CD4-positive, alpha-beta T cell (primary cell): ENCODE measurements at regions of chr9 and their contacts with region 1.

Region 1: DNA sequence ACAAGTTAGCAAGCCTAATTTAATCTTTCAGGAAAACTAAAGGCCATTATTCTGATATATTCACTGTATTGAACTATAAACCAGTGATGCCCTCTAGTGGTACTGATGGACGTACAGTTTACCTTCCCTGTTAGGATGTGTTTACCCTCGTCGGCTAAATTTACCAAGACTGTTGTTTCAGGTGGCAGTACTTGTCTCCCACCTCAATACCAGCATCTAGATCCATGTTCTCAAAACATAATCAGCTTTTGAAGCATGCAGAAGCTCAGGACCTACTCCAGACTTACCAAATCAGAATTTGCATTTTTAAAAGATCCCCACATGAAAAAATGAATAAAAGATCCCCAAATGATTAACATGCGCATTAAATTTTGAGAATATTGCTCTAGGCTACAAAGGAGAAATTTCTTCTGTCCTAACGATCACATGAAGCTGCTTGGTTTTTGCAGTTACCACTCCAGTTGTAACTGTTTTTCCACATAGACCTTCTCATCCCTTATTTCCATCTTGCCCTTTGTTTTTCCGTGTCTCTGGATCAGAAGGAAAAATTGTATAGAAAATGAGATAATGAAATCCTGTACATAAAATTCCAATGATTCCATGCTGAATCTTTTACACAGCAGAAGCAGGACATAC is 3.2 kb upstream of the BAAT start:
- DNase-seq: peak in 4 of 14 experiments; percentile 13 to 62 (median 48)
- ATAC-seq: peak; percentile 65
- H3K4me3 ChIP-seq: no peak overlapping the region
- H3K4me3 Mint-ChIP-seq: no peak overlapping the region
- H3K27ac ChIP-seq: no peak overlapping the region
- H3K27ac Mint-ChIP-seq: peak overlapping the region; percentile 40
- H3K4me1 ChIP-seq: no peaks in the 10 kb centered on the region
- H3K4me1 Mint-ChIP-seq: peaks cover 32% of the 10 kb centered on the region
- H3K27me3 ChIP-seq: no peaks in the 10 kb centered on the region
- H3K27me3 Mint-ChIP-seq: no peaks in the 10 kb centered on the region
- CTCF ChIP-seq: peak; percentile 60

Region 2: DNA sequence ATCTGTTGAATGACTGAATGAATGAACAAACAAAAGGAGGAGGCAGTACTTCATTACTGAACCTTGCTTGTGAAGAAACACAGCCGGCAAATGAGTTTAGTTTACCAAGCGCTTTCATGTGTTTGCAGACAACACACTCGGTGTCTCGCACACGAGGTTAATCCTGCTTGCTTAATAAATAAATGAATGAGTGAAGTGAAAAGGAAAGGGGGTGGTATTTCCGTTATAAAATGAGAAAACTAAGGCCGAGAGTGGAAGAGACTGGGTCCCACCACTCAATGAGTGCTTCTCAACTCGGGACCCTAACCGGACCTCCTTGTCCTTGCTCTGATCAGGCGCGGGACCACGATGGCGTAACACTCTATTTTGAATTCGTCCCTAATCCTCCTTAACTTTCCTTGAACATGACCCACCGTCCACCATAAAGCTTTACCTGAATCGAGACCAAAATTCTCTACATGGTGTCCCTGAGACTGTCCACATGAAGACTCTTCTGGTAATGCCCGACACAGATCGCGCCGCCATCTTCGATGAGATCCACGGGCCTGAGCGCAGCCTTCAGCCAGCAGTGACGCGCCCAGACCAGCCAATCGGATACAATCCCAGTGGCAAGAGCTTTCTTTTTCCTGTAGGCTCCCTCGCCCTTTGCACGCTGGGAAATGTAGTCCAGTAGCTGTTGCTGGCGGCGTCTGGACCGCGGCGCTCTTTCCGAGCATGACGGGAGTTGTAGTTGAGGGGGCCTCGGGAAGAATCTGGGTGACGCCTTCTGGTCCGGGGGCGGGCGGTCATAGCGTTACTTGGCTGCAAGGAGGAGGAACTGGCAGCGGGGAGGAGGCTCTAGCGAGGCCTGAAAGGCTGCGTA is 10.3 kb after region 1 on chr9 and contains the starts of genes MRPL50 and ZNF189:
- CTCF ChIA-PET with region 1: interaction called, 14 read pairs
- POLR2A ChIA-PET with region 1: interaction called, 15 read pairs
- intact Hi-C with region 1: no loop called
- DNase-seq: peak; percentile 90 to 99 (median 94)
- ATAC-seq: peak; percentile 94
- H3K4me3 ChIP-seq: peak within 1 kb of the TSS; percentile 81
- H3K4me3 Mint-ChIP-seq: peak within 1 kb of the TSS; percentile 99
- H3K27ac ChIP-seq: peak within 1 kb of the TSS; percentile 87 to 92
- H3K27ac Mint-ChIP-seq: peak within 1 kb of the TSS; percentile 99
- H3K4me1 ChIP-seq: peaks cover 32% of the 10 kb centered on the region
- H3K4me1 Mint-ChIP-seq: peaks cover 86% of the 10 kb centered on the region
- H3K27me3 ChIP-seq: no peaks in the 10 kb centered on the region
- H3K27me3 Mint-ChIP-seq: no peaks in the 10 kb centered on the region
- CTCF ChIP-seq: no peak
- total RNA-seq, gene MRPL50: 5.9 to 6.1 TPM
- total RNA-seq, gene ZNF189: 5.0 to 5.3 TPM

Region 3: DNA sequence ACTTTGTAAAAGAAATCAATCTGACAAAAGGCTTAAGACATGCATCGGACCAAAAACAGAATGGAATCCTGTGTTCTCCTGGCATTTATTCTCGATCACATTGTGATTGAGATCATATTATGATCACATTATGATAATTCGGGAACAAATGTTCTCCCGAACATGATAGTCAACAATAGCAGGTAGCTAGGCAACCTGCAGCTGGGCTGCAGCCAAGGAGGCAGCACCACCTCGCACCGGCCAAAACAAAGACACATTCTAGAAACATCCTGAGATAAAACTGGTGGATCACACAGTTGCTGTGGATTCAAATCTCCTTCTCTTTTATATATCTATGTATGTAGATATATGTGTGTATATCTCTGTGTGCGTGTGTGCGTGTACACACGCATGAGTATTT is 1126.6 kb after region 1 on chr9:
- CTCF ChIA-PET with region 1: no interaction called
- POLR2A ChIA-PET with region 1: no interaction called
- intact Hi-C with region 1: no loop called
- DNase-seq: no peak
- ATAC-seq: no peak
- H3K4me3 ChIP-seq: no peak overlapping the region
- H3K4me3 Mint-ChIP-seq: no peak overlapping the region
- H3K27ac ChIP-seq: no peak overlapping the region
- H3K27ac Mint-ChIP-seq: no peak overlapping the region
- H3K4me1 ChIP-seq: no peaks in the 10 kb centered on the region
- H3K4me1 Mint-ChIP-seq: no peaks in the 10 kb centered on the region
- H3K27me3 ChIP-seq: no peaks in the 10 kb centered on the region
- H3K27me3 Mint-ChIP-seq: no peaks in the 10 kb centered on the region
- CTCF ChIP-seq: no peak